Mammary epithelial cell (primary cell): ENCODE measurements at regions of chr7 and their contacts with region 1.

Region 1: DNA sequence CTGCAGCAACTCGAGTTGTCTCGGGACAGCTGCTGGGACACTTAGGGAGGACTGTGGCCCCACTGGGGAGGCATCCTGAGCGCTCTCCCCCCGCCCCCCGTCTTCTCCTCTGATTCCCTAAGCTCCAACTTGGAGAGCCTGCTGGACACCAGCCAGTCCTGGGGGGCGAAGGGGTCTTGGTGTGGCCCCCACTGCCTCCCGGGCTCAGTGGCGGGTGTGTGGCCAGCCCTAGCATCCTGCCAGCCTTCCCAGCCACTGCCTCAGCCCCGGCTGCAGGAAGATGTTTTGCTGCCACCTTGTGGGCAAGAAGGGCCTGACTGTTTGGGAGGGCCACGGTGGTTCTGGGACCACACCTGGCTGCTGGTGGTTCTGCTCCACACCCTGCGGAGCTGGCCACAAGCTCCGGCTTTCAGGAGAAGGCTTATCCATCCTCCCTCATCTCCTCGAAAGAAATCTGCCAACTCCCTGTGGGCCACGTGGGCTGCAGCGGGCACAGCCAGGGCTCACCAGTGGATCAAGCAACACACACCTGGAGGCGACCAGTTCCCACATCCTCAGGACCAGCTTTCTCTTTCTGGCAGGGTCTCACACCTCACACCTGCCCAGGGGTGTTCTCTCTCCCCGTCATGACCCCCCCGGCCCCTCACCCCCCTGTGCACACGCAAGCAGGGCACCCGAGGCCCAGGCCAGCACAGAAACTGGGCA is 24.8 kb downstream of the AGAP3 start:
- DNase-seq: peak; percentile 61
- H3K4me3 ChIP-seq: no peak overlapping the region
- H3K27ac ChIP-seq: no peak overlapping the region
- H3K4me1 ChIP-seq: peaks cover 19% of the 10 kb centered on the region
- H3K27me3 ChIP-seq: no peaks in the 10 kb centered on the region
- CTCF ChIP-seq: peak; percentile 75 to 89

Region 2: DNA sequence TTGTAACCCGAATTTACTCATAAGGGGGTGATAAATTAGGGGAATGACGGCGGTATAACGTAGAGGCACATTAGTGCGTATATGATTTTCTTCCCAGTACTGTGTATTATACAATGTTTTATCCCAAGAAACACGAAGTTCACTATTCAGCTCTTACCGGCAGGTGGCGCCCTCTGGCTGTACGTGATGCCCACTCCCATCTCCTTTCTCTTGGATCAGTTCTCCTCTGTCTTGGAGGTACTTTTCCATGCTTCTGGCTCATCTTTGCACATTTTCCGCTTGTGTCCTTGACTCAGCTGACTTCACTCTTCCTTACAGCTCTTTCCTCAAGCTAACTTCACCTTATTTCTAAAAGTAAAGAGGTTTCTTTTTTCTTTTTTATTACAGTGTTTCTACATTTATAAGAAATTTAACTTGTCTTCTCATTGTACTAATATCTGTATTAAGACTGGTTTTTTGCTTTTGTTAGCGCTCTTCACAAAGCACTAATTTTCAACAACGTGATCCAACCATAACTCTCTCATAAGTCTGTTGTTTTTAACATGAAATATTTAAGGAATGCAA is 332.3 kb before region 1 on chr7:
- CTCF ChIA-PET with region 1: no interaction called
- dilution Hi-C with region 1: no loop called
- in situ Hi-C with region 1: no loop called
- intact Hi-C with region 1: loop called (anchors 2 kb)
- DNase-seq: peak; percentile 42
- H3K4me3 ChIP-seq: no peak overlapping the region
- H3K27ac ChIP-seq: no peak overlapping the region
- H3K4me1 ChIP-seq: no peaks in the 10 kb centered on the region
- H3K27me3 ChIP-seq: no peaks in the 10 kb centered on the region
- CTCF ChIP-seq: peak; percentile 86 to 92

Region 3: DNA sequence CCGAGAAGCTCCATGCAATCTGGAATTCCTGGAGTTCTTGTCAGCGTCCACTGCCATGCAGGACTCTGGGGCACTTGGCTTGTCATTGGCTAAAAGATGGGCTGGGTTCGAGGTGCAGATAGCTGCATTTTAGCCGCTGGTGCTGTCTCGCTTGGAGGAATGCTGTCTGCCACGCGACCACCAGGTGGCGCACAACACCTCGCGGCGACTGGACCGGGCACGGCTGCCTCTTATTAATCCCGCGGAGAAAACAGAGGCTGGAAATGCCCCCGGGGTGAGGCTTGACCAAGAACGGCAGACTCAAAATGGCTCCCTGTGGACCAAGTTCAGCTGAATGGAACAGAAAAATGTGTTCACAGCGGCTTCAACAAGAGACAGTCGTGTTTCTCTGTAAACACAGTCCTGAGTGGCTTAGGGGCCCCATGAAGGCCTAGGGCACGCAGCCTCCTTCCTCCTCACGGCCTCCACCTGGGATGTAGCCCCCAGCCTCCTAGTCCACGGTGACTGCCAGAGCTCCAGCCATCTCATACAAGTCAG is 212.6 kb before region 1 on chr7:
- CTCF ChIA-PET with region 1: interaction called, 6 read pairs
- dilution Hi-C with region 1: no loop called
- in situ Hi-C with region 1: no loop called
- intact Hi-C with region 1: loop called (anchors 1 kb)
- DNase-seq: peak; percentile 46
- H3K4me3 ChIP-seq: no peak overlapping the region
- H3K27ac ChIP-seq: no peak overlapping the region
- H3K4me1 ChIP-seq: peaks cover 8% of the 10 kb centered on the region
- H3K27me3 ChIP-seq: peaks cover 2% of the 10 kb centered on the region
- CTCF ChIP-seq: peak; percentile 86 to 91

Region 4: DNA sequence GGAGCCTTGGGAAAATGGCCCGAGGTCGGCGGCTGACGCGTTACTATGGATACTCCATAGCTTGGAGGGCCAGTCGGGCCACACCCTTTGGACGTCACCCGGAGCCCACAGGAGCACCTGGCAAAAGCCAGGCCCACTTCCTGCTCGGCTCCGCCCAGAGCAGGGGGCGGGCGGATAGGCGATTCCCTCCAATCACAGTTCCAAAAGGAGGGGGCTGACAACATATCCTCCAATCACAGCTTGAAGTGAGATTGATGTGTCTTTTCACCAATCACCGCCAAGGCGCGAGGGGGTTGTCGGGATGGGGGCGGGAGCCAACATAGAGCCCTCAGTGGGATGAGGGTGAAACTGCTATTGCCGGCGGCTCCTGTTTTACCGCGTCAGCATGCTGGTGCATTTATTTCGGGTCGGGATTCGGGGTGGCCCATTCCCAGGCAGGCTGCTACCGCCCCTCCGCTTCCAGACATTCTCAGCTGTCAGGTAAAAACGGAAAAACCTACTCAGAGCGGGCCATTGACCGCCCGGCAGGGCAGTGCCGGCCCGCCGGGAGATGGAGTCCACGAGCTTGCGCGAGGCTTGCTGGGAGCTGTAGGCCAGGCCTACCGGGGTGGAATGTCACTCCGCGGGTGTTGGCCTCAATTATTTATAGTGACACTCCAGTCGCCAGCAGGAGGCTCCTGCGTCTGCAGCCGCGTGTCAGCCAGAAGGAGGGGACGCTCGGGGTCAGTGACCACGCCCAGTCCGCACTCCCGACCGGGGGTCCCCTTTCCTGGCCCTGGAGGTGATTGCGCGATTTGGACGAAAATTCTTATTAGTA is 82.8 kb before region 1 on chr7 and contains the start of gene ABCB8:
- CTCF ChIA-PET with region 1: no interaction called
- dilution Hi-C with region 1: no loop called
- in situ Hi-C with region 1: no loop called
- intact Hi-C with region 1: loop called (anchors 1 kb)
- DNase-seq: peak; percentile 99
- H3K4me3 ChIP-seq: peak within 1 kb of the TSS; percentile 60 to 80 (median 73)
- H3K27ac ChIP-seq: peak within 1 kb of the TSS; percentile 93
- H3K4me1 ChIP-seq: peaks cover 29% of the 10 kb centered on the region
- H3K27me3 ChIP-seq: no peaks in the 10 kb centered on the region
- CTCF ChIP-seq: peak in 1 of 2 donors; percentile 61
- total RNA-seq, gene ABCB8: 29.8 to 57.2 TPM

Region 5: DNA sequence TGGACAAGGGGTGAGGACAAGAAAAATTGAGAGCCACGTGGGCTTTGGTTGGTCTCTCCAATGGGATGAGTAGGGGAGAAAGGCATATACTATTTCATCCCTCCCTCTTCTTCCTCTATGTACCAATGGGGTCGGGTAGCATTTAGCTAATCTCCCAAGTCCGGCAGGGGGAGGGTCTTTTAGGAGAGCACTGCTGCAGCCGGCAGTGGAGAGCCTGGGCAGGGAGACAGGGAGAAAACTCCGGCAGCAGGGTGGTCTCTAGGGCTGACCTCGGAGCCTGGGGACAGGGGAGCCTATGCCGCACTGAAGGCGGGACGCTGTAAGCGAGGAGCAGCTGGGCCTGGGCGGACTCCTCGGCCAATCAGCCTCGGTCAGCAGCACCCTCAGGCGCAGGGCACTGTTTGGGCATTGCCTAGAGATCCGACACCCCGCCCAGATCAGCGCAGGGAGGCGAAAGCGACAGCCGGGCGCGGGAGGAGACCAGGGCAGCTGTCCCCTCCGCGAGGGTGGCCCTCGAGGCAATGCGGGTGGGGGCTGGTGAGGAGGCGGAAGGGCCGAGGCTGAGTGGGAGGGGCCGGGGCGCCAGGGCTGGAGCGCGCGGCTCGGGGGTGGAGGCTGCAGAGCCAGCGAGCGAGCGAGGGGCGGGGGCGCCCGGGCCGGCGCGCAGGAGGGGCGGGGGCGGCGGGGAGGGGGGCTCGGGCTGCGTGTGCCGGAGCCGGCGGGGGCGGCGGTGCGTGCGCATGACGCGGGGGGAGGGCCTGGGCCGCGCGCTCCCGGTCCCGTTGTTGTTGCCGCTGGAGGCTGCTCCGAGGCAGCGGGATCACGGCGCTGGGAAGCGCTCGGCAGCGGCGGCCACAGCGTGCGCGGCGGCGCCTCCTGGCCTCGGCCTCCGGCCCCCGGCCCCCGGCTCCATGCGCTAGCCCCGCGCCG is 25.1 kb before region 1 on chr7 and contains the start of gene AGAP3:
- CTCF ChIA-PET with region 1: no interaction called
- dilution Hi-C with region 1: no loop called
- in situ Hi-C with region 1: no loop called
- intact Hi-C with region 1: loop called (anchors 1 kb)
- DNase-seq: peak; percentile 51
- H3K4me3 ChIP-seq: peak within 1 kb of the TSS; percentile 85 to 93 (median 92)
- H3K27ac ChIP-seq: peak within 1 kb of the TSS; percentile 77
- H3K4me1 ChIP-seq: peaks cover 51% of the 10 kb centered on the region
- H3K27me3 ChIP-seq: no peaks in the 10 kb centered on the region
- CTCF ChIP-seq: no peak
- total RNA-seq, gene AGAP3: 118 to 163 TPM

Region 6: DNA sequence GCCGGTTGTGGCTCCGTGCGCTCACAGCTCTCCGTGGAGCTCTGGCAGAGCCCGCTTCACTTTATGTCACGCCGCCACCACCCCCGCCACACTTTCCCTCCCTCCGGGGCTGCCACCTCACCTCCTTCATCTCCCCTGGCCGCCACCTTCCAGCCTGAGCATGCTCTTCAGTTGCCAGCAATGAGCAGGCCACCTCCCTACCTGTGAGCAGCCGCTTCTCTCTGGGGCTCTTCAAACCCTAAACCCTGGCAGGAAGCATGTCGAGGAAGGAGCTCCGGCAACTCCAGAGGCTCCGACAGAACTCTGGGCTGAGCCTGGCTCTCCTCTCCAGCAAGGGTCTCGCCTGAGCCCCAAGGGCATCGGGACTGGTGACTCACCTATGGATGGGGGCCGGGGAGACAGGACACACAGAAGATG is 19.7 kb after region 1 on chr7:
- CTCF ChIA-PET with region 1: no interaction called
- dilution Hi-C with region 1: no loop called
- in situ Hi-C with region 1: no loop called
- intact Hi-C with region 1: no loop called
- DNase-seq: no peak
- H3K4me3 ChIP-seq: no peak overlapping the region
- H3K27ac ChIP-seq: no peak overlapping the region
- H3K4me1 ChIP-seq: no peaks in the 10 kb centered on the region
- H3K27me3 ChIP-seq: no peaks in the 10 kb centered on the region
- CTCF ChIP-seq: no peak

Region 7: GRCh38 chr7:151172273-151173141 is 61.4 kb after region 1 on chr7:
- CTCF ChIA-PET with region 1: no interaction called
- dilution Hi-C with region 1: no loop called
- in situ Hi-C with region 1: no loop called
- intact Hi-C with region 1: loop called (anchors 2 kb)
- DNase-seq: peak; percentile 56
- H3K4me3 ChIP-seq: no peak overlapping the region
- H3K27ac ChIP-seq: no peak overlapping the region
- H3K4me1 ChIP-seq: no peaks in the 10 kb centered on the region
- H3K27me3 ChIP-seq: peaks cover 20% of the 10 kb centered on the region
- CTCF ChIP-seq: peak; percentile 100